Activated B cell treated with CpG ODN at 0.5 μM for 24 hours (primary cell): ENCODE measurements at regions of chr20 and their contacts with region 1.

Region 1: GRCh38 chr20:36050436-36051317 is 82.3 kb downstream of the CNBD2 start:
- DNase-seq: peak; percentile 80
- ATAC-seq: peak; percentile 94
- H3K4me3 Mint-ChIP-seq: peak overlapping the region; percentile 86
- H3K27ac Mint-ChIP-seq: peak overlapping the region; percentile 91
- H3K4me1 Mint-ChIP-seq: peaks cover 54% of the 10 kb centered on the region
- H3K27me3 Mint-ChIP-seq: no peaks in the 10 kb centered on the region
- CTCF ChIP-seq: no peak

Region 2: GRCh38 chr20:36064658-36065426 is 14.2 kb after region 1 on chr20:
- CTCF ChIA-PET with region 1: no interaction called
- POLR2A ChIA-PET with region 1: interaction called, 11 read pairs
- intact Hi-C with region 1: loop called (anchors 1 kb)
- DNase-seq: peak; percentile 99
- ATAC-seq: peak; percentile 96
- H3K4me3 Mint-ChIP-seq: peak overlapping the region; percentile 90
- H3K27ac Mint-ChIP-seq: peak overlapping the region; percentile 78
- H3K4me1 Mint-ChIP-seq: peaks cover 5% of the 10 kb centered on the region
- H3K27me3 Mint-ChIP-seq: peaks cover 3% of the 10 kb centered on the region
- CTCF ChIP-seq: no peak

Region 3: DNA sequence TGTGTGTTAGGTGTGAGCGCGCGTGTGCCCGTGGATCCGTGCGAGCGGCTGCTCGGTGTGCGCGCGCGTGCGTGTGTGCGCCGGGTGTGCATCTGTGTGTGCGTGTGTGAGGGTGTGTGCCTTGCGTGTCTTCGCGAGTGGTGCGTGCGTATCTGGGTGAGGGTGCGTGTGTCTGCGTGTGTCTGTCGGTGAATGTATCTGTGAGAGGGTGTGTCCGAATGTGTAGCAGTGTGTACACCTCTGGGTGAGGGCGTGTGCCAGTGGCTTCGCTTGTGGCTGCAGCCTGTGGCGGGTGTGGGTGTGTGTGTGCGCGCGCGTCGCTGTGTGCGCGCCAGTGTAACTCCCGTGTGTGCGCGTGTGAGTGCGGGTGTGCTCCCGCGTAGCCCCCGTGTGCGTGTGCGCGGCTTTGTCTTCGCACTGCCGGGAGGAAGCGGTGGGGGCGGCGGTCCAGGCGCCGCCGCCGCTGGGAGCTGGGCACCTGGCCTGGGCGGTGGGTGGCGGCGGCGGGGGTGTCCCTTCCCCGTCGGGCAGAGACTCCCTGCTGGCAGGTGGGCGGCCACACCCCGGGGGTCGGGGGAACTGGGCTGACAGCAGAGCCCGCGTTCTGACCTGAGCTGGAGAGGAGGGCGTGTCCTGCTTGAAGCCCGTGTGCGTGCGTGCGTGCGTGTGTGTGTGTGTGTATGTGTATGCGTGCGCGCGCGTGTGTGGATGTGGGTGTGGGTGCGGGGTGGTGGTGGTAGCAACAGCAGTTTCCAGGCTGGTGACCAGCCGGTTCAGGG is 42.5 kb after region 1 on chr20:
- CTCF ChIA-PET with region 1: no interaction called
- POLR2A ChIA-PET with region 1: interaction called, 3 read pairs
- intact Hi-C with region 1: loop called (anchors 5 kb)
- DNase-seq: peak; percentile 30
- ATAC-seq: peak; percentile 45
- H3K4me3 Mint-ChIP-seq: peak overlapping the region; percentile 85
- H3K27ac Mint-ChIP-seq: peak overlapping the region; percentile 14
- H3K4me1 Mint-ChIP-seq: peaks cover 35% of the 10 kb centered on the region
- H3K27me3 Mint-ChIP-seq: peaks cover 30% of the 10 kb centered on the region
- CTCF ChIP-seq: no peak

Region 4: DNA sequence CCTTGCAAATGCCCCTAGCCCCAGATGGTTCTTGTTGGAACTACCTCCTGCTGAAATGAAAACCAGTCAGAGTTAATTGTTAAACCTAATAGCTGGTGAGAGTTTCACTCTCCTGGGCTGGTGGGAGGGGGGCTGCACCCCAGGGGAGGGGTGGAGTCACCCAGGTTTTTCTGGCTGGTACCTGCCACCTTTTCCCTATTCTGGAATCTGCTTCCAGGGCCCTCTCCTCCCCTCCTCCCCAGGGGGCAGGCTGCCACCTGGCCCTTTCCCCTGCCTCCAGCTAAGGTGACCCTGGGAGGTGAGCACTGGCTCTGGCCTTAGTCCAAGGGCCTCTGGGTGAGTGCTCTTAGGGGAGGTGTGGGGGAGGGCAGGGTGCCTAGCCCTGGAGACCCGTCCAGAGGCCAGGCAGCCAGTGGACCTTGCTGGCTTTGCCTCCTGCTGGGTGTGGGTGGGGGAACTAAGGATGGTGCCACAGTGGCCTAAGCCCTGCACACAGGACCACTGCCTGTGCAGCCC is 55.1 kb after region 1 on chr20:
- CTCF ChIA-PET with region 1: no interaction called
- POLR2A ChIA-PET with region 1: no interaction called
- intact Hi-C with region 1: no loop called
- DNase-seq: no peak
- ATAC-seq: no peak
- H3K4me3 Mint-ChIP-seq: no peak overlapping the region
- H3K27ac Mint-ChIP-seq: no peak overlapping the region
- H3K4me1 Mint-ChIP-seq: no peaks in the 10 kb centered on the region
- H3K27me3 Mint-ChIP-seq: peaks cover 1% of the 10 kb centered on the region
- CTCF ChIP-seq: no peak

Region 5: GRCh38 chr20:36305602-36306551 is 255.2 kb after region 1 on chr20 and contains the start of gene DLGAP4:
- CTCF ChIA-PET with region 1: no interaction called
- POLR2A ChIA-PET with region 1: no interaction called
- intact Hi-C with region 1: no loop called
- DNase-seq: no peak
- ATAC-seq: no peak
- H3K4me3 Mint-ChIP-seq: peak within 1 kb of the TSS; percentile 69
- H3K27ac Mint-ChIP-seq: no peak within 1 kb of the TSS
- H3K4me1 Mint-ChIP-seq: peaks cover 9% of the 10 kb centered on the region
- H3K27me3 Mint-ChIP-seq: peaks cover 65% of the 10 kb centered on the region
- CTCF ChIP-seq: no peak
- total RNA-seq, gene DLGAP4: 36.4 and 38.7 TPM in 2 replicates

Region 6: DNA sequence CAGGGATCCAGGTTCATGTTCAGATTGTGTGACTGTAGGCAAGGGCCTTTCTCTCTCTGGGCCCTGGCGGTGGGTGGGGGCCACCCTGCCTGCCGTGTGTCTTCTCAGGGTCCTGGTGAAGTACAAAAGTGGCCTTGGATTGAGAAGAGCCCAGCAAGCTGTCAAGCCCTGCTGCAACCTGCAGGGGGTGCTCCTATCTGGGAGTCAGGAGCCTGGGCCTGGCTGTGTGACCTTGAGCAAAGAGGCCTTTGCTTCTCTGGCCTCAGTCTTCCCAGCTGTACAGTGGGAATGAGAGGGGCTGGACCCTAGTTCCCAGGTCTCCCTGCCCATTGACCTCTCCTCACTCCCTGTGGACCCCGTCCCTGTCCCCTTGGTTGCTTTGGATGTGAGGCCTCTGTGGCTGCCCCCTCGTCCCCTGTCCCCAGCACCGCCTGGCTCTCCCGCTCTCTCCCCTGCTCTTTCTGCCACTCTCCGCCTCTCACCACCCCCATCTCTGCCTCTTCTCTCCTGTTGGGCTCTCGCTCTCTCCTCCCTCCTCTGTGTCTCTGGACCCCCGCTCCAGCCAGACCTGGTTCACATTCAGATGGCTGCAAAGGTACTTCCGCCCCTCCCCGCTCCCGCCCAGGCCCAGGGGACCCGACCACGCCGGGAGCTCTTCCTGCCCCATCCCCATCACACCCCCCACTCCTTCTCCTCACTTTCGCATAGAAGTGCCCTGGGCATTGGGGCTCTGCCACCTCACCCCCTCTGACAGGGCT is 1341.9 kb after region 1 on chr20:
- CTCF ChIA-PET with region 1: no interaction called
- POLR2A ChIA-PET with region 1: no interaction called
- intact Hi-C with region 1: no loop called
- DNase-seq: no peak
- ATAC-seq: peak; percentile 49
- H3K4me3 Mint-ChIP-seq: no peak overlapping the region
- H3K27ac Mint-ChIP-seq: no peak overlapping the region
- H3K4me1 Mint-ChIP-seq: no peaks in the 10 kb centered on the region
- H3K27me3 Mint-ChIP-seq: no peaks in the 10 kb centered on the region
- CTCF ChIP-seq: no peak